ENCODE measurements at regions of chr16 and their contacts with region 1.

Region 1: DNA sequence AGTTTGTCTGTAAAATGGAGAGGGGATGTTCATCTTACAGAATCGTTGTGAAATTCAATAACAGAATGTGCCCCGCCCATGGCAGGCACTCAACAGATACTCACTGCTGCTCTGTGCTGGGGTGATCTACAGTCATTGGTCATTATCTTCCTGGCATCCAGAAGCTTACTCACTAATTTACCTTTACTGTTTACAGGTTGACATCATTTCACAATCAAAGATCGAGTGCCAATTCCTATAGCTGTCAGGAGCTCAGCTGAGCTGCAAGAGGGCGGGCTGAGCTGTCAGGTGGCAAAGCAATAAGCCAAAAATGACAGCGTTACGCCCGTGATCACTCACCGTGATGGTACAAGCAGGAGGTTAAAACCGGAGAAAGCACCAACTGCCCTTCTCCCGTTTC is 51.2 kb downstream of the LITAF start:
- DNase-seq: no peak
- H3K4me3 Mint-ChIP-seq: no peak overlapping the region
- H3K27ac Mint-ChIP-seq: no peak overlapping the region
- H3K4me1 Mint-ChIP-seq: peaks cover 7% of the 10 kb centered on the region
- H3K27me3 Mint-ChIP-seq: peaks cover 4% of the 10 kb centered on the region

Region 2: DNA sequence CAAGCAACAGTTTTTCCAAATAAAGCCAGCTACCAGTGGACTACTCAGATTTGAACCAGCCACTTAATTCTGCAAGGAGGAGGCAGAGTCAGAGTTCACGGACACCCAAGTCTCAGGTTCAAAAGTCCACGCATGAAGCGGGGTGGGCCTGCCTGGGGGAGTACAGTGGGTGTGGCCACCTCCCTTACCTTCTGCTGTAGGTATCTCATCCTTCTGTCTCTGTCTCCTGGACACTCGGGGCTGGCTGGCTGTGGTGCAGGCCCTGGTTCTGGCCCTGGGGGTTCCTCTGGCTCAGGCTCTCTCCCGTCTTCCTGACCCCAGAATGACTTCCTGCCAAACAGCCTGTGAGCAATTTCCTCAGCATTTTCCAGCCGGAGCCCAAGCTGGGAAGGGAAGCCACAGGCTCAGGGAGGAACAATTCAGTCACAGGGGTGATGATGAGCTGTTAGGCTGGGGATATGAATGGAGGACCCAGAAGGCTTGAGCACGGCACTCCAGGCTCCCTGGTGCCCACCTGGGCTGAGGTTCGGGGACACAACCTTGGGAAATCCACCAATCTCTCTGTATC is 50.7 kb before region 1 on chr16:
- CTCF ChIA-PET with region 1: no interaction called
- DNase-seq: no peak
- H3K4me3 Mint-ChIP-seq: no peak overlapping the region
- H3K27ac Mint-ChIP-seq: no peak overlapping the region
- H3K4me1 Mint-ChIP-seq: no peaks in the 10 kb centered on the region
- H3K27me3 Mint-ChIP-seq: no peaks in the 10 kb centered on the region

Region 3: DNA sequence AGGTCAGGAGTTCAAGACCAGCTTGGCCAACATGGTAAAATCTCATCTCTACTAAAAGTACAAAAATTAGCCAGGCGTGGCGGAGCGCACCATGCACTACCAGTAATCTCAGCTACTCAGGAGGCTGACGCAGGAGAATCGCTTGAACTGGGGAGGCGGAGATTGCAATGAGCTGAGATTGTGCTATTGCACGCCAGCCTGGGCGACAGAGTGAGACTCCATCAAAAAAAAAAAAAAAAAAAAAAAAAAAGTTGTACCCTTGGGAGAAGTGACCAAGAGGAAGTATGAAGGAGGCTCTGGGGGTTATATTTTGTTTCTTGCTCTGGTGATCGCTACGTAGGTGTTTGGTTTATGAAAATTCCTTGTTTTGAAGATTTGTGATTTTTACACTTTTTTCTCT is 15.0 kb before region 1 on chr16:
- CTCF ChIA-PET with region 1: interaction called, 18 read pairs
- DNase-seq: no peak
- H3K4me3 Mint-ChIP-seq: no peak overlapping the region
- H3K27ac Mint-ChIP-seq: no peak overlapping the region
- H3K4me1 Mint-ChIP-seq: peaks cover 4% of the 10 kb centered on the region
- H3K27me3 Mint-ChIP-seq: peaks cover 25% of the 10 kb centered on the region

Region 4: GRCh38 chr16:11586856-11587642 is 51.6 kb after region 1 on chr16 and contains the start of gene LITAF:
- CTCF ChIA-PET with region 1: interaction called, 17 read pairs
- DNase-seq: peak; percentile 75
- H3K4me3 Mint-ChIP-seq: peak within 1 kb of the TSS; percentile 99
- H3K27ac Mint-ChIP-seq: peak within 1 kb of the TSS; percentile 94
- H3K4me1 Mint-ChIP-seq: peaks cover 42% of the 10 kb centered on the region
- H3K27me3 Mint-ChIP-seq: peaks cover 32% of the 10 kb centered on the region

Region 5: GRCh38 chr16:11639925-11640899 is 104.7 kb after region 1 on chr16:
- CTCF ChIA-PET with region 1: interaction called, 106 read pairs
- DNase-seq: no peak
- H3K4me3 Mint-ChIP-seq: no peak overlapping the region
- H3K27ac Mint-ChIP-seq: no peak overlapping the region
- H3K4me1 Mint-ChIP-seq: peaks cover 20% of the 10 kb centered on the region
- H3K27me3 Mint-ChIP-seq: peaks cover 43% of the 10 kb centered on the region

Measured in activated naive CD4-positive, alpha-beta T cell treated with anti-CD3 and anti-CD28 coated beads, Interleukin-2, amount 10 ng/mL, durations not matched to agents 7 days and 5 days (primary cell).